H1 (cell line): ENCODE measurements at regions of chr22 and their contacts with region 1.

Region 1: GRCh38 chr22:30289134-30289979 is at the start of gene CASTOR1:
- DNase-seq: peak; percentile 91 to 98
- H3K4me3 ChIP-seq: peak within 1 kb of the TSS; percentile 58 to 74 (median 70)
- H3K27ac ChIP-seq: no peak within 1 kb of the TSS
- H3K4me1 ChIP-seq: peaks cover 0 to 19% (median 14%) of the 10 kb centered on the region in 4 experiments; a peak in 6 of 7 replicates
- H3K27me3 ChIP-seq: no peaks in the 10 kb centered on the region
- CTCF ChIP-seq: no peak
- EP300 ChIP-seq: no peak; a peak in 1 of 3 replicates
- POLR2A ChIP-seq: peak in 1 of 2 experiments; percentile 45; a peak in 1 of 3 replicates
- RAD21 ChIP-seq: no peak
- total RNA-seq, gene CASTOR1: 8.4 and 10.3 TPM in 2 replicates

Region 2: GRCh38 chr22:29663180-29663821 is 626.1 kb before region 1 on chr22:
- CTCF ChIA-PET with region 1: no interaction called
- POLR2A ChIA-PET with region 1: no interaction called
- DNase-seq: no peak
- H3K4me3 ChIP-seq: no peak overlapping the region
- H3K27ac ChIP-seq: no peak overlapping the region
- H3K4me1 ChIP-seq: no peaks in the 10 kb centered on the region
- H3K27me3 ChIP-seq: no peaks in the 10 kb centered on the region
- CTCF ChIP-seq: no peak
- EP300 ChIP-seq: no peak
- POLR2A ChIP-seq: no peak
- RAD21 ChIP-seq: no peak

Region 3: DNA sequence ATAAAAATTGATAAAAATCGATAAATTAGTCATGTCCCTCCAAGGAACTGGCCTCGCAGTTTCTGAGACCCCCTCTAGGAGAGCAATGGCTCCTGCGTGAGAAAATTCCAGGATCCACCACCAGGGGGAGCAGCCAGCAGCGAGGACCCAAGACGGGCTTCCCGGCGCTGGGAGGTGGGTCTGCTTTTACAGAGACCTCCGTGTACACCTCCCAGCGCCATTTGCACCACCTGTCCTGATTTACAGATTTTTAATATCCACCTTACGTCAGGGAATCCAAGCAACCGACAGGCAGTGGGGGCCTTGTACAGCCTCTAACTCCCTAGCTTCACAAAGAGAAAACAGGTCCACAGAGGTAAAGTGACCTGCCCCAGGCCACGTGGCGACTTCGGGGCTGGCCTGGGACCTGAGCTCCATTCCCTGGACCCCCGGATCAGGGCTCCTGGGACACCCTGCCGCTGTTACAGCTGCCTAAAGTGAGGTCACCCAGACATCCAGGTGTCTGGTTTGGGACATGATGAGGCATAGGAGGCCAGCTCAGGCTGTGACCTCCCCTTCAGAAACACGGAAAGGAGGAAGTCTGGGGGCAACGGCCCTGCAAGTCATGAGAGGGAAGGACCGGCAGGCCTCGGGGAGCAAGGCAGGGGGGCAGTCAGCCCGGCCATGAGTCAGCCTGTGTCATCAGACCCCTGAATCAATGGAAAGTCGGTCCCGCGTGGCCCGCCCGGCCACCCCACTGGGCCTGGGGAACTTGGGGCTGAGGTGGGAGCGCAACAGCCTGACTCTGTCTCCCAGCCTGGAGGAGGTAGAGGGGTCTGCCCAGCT is 26.2 kb before region 1 on chr22:
- CTCF ChIA-PET with region 1: interaction called, 12 read pairs
- POLR2A ChIA-PET with region 1: no interaction called
- DNase-seq: peak; percentile 66 to 98
- H3K4me3 ChIP-seq: no peak overlapping the region
- H3K27ac ChIP-seq: no peak overlapping the region
- H3K4me1 ChIP-seq: peaks cover 0 to 4% (median 2%) of the 10 kb centered on the region in 4 experiments; a peak in 6 of 7 replicates
- H3K27me3 ChIP-seq: no peaks in the 10 kb centered on the region; a peak in 2 of 7 replicates
- CTCF ChIP-seq: peak; percentile 85 to 99 (median 90)
- EP300 ChIP-seq: no peak
- POLR2A ChIP-seq: no peak
- RAD21 ChIP-seq: peak; percentile 59 to 72

Region 4: GRCh38 chr22:30301995-30302809 is 12.8 kb after region 1 on chr22:
- CTCF ChIA-PET with region 1: interaction called, 48 read pairs
- POLR2A ChIA-PET with region 1: interaction called, 4 read pairs
- DNase-seq: no peak
- H3K4me3 ChIP-seq: no peak overlapping the region
- H3K27ac ChIP-seq: no peak overlapping the region
- H3K4me1 ChIP-seq: no peaks in the 10 kb centered on the region; a peak in 1 of 7 replicates
- H3K27me3 ChIP-seq: no peaks in the 10 kb centered on the region
- CTCF ChIP-seq: no peak
- EP300 ChIP-seq: no peak
- POLR2A ChIP-seq: no peak
- RAD21 ChIP-seq: no peak

Region 5: DNA sequence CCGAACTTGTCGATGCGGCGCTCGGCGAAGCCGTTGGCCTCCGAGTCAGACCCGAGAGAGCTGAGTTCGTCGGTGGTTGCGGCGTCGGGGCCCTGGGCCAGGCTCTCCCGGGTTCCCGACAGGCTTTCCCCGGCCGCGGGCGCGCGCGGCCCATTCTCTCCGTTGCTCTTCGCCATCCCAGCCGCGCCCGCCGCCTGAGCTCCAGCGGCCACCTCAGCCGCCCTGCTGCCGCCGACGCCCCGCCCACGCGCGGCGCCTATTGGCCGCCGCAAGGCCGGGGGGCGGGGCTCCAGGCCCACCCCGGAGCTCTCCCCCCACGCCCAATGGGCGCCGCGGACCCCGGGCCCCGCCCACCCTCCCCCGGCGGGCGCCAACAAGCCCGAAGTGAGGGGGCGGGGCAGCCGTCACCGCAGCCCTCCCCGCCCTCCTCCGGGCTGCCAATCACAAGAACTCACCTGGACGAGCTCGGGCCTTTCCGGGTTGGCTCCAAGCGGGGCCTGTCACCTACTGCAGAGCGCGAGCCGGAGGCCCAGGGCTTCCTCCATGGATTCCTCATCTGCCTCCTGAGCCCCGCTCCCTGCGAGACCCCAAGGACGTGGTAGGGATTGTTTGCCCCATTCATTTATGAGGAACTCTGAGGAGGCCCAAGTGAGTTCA is 37.5 kb after region 1 on chr22 and contains the start of gene TBC1D10A:
- CTCF ChIA-PET with region 1: interaction called, 203 read pairs
- POLR2A ChIA-PET with region 1: interaction called, 11 read pairs
- DNase-seq: peak; percentile 90 to 92
- H3K4me3 ChIP-seq: peak within 1 kb of the TSS; percentile 71 to 99 (median 75)
- H3K27ac ChIP-seq: peak within 1 kb of the TSS; percentile 5; the same call in 1 of the 2 replicates
- H3K4me1 ChIP-seq: peaks cover 0 to 14% (median 7%) of the 10 kb centered on the region in 4 experiments; a peak in 6 of 7 replicates
- H3K27me3 ChIP-seq: no peaks in the 10 kb centered on the region
- CTCF ChIP-seq: no peak; a peak in 1 of 4 replicates
- EP300 ChIP-seq: no peak
- POLR2A ChIP-seq: 0 out of 3 replicates have a peak, but pooled peaks of 1 of the 2 experiments have one; percentile 31
- RAD21 ChIP-seq: no peak
- total RNA-seq, gene TBC1D10A: 5.4 and 6.5 TPM in 2 replicates

Region 6: GRCh38 chr22:30356449-30357235 is 67.3 kb after region 1 on chr22 and contains the starts of genes CCDC157 and SF3A1:
- CTCF ChIA-PET with region 1: interaction called, 9 read pairs
- POLR2A ChIA-PET with region 1: interaction called, 17 read pairs
- DNase-seq: peak; percentile 72 to 91
- H3K4me3 ChIP-seq: peak within 1 kb of the TSS; percentile 78 to 93 (median 91)
- H3K27ac ChIP-seq: peak within 1 kb of the TSS; percentile 93
- H3K4me1 ChIP-seq: peaks cover 2 to 11% (median 4%) of the 10 kb centered on the region in 4 experiments; a peak in 6 of 7 replicates
- H3K27me3 ChIP-seq: no peaks in the 10 kb centered on the region
- CTCF ChIP-seq: no peak
- EP300 ChIP-seq: peak in 1 of 2 experiments; percentile 5; a peak in 1 of 3 replicates
- POLR2A ChIP-seq: peak; percentile 87 to 98
- RAD21 ChIP-seq: no peak
- total RNA-seq, gene CCDC157: 4.1 and 4.8 TPM in 2 replicates
- total RNA-seq, gene SF3A1: 275 and 285 TPM in 2 replicates

Region 7: DNA sequence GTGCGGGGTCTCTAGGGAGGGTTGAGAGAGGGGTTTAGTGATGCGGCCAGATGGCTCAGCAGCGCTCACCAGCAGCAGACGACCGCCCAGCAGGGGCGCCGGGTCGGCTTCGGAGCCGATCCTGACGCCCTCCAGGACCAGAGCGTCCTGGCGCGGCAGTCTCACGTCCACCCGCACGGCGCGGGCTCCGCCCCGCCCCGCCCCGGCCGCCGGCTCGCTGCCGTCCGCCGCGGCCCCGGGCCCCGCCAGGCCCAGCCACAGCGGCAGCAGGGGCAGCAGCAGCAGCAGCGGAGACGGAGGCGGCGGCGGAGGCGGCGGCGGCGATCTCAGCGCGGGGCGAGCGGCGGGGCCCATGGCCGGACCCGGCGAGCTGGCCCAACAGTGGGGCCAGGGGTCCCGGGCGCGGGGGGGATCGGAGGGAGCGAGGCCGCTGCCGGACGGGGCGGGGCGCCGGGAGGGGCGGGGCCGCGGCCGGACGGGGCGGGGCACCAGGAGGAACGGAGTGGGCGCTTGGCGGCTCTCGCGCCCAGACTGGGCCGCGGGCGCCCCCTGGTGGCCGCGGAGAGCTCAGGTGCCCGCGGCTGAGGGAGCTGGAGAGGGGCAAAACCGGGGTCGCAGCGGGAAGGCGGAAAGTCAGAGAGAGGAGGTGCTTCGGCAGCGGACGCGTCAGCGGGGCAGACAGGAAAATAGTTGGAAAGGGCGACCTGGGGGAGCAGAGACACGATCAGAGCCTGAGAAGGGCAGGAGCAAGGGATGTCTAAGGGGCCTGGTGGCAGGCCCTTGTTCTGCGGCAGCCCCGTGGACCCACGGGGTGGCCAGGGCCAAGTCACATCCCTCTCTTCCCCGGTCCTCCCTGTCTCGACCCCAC is 97.8 kb after region 1 on chr22 and contains the start of gene RNF215:
- CTCF ChIA-PET with region 1: interaction called, 17 read pairs
- POLR2A ChIA-PET with region 1: no interaction called
- DNase-seq: peak; percentile 77 to 95
- H3K4me3 ChIP-seq: peak within 1 kb of the TSS; percentile 42 to 66 (median 54)
- H3K27ac ChIP-seq: no peak within 1 kb of the TSS
- H3K4me1 ChIP-seq: peaks cover 0 to 7% (median 2%) of the 10 kb centered on the region in 4 experiments; a peak in 4 of 7 replicates
- H3K27me3 ChIP-seq: no peaks in the 10 kb centered on the region
- CTCF ChIP-seq: peak; percentile 79 to 92 (median 79)
- EP300 ChIP-seq: no peak
- POLR2A ChIP-seq: no peak
- RAD21 ChIP-seq: peak; percentile 78 to 86
- total RNA-seq, gene RNF215: 15.3 and 19.0 TPM in 2 replicates